ENCODE measurements at regions of chr6 and their contacts with region 1.

Region 1: DNA sequence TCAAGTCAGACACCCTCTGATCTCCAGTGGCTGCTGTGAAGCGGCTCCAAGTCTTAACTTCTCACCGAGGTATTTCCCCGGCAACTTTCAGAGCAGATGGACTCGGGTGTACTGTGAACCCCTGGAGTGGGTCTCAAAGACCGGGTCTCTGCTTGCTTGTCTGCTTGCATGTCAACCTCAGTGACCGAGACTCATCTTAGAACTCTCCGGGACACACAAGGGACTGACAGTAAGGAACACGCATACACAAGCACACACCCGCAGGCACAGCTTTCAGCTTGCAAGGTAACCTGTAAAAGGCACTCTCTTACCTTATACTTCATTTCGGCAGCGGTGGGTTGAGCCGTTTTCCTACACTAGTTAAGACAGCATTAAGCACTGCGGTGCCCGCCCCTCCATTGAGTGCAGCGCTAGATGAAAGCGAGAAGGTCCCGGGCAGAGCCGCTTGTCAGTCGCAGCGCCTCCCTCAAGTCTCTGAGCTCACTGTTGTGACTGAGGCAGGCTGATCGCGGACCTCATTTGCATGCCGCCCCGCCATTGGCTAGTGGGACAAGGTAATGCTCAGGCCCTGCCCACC is at the start of gene NEDD9:
- DNase-seq: peak; percentile 85 to 98 (median 90)
- ATAC-seq: peak; percentile 93
- H3K4me3 ChIP-seq: peak within 1 kb of the TSS; percentile 61
- H3K4me3 Mint-ChIP-seq: peak within 1 kb of the TSS; percentile 94
- H3K27ac ChIP-seq: peak within 1 kb of the TSS; percentile 73 to 89
- H3K27ac Mint-ChIP-seq: peak within 1 kb of the TSS; percentile 97
- H3K4me1 ChIP-seq: peaks cover 33% of the 10 kb centered on the region
- H3K4me1 Mint-ChIP-seq: peaks cover 53% of the 10 kb centered on the region
- H3K27me3 ChIP-seq: no peaks in the 10 kb centered on the region
- H3K27me3 Mint-ChIP-seq: no peaks in the 10 kb centered on the region
- CTCF ChIP-seq: no peak
- total RNA-seq, gene NEDD9: 40.9 to 44.3 TPM

Region 2: GRCh38 chr6:11093589-11094410 is 138.5 kb before region 1 on chr6 and contains the start of gene SMIM13:
- CTCF ChIA-PET with region 1: no interaction called
- POLR2A ChIA-PET with region 1: interaction called, 3 read pairs
- intact Hi-C with region 1: loop called (anchors 2 to 5 kb)
- DNase-seq: peak; percentile 88 to 97 (median 94)
- ATAC-seq: peak; percentile 92
- H3K4me3 ChIP-seq: peak within 1 kb of the TSS; percentile 83
- H3K4me3 Mint-ChIP-seq: peak within 1 kb of the TSS; percentile 97
- H3K27ac ChIP-seq: peak within 1 kb of the TSS; percentile 87 to 92
- H3K27ac Mint-ChIP-seq: peak within 1 kb of the TSS; percentile 97
- H3K4me1 ChIP-seq: peaks cover 20% of the 10 kb centered on the region
- H3K4me1 Mint-ChIP-seq: peaks cover 29% of the 10 kb centered on the region
- H3K27me3 ChIP-seq: no peaks in the 10 kb centered on the region
- H3K27me3 Mint-ChIP-seq: no peaks in the 10 kb centered on the region
- CTCF ChIP-seq: peak; percentile 74
- total RNA-seq, gene SMIM13: 3.0 to 4.6 TPM

Region 3: GRCh38 chr6:11161031-11161966 is 71.0 kb before region 1 on chr6:
- CTCF ChIA-PET with region 1: no interaction called
- POLR2A ChIA-PET with region 1: no interaction called
- intact Hi-C with region 1: no loop called
- DNase-seq: no peak
- ATAC-seq: no peak
- H3K4me3 ChIP-seq: no peak overlapping the region
- H3K4me3 Mint-ChIP-seq: no peak overlapping the region
- H3K27ac ChIP-seq: no peak overlapping the region
- H3K27ac Mint-ChIP-seq: no peak overlapping the region
- H3K4me1 ChIP-seq: no peaks in the 10 kb centered on the region
- H3K4me1 Mint-ChIP-seq: no peaks in the 10 kb centered on the region
- H3K27me3 ChIP-seq: no peaks in the 10 kb centered on the region
- H3K27me3 Mint-ChIP-seq: no peaks in the 10 kb centered on the region
- CTCF ChIP-seq: no peak

Region 4: GRCh38 chr6:11194356-11195218 is 37.7 kb before region 1 on chr6:
- CTCF ChIA-PET with region 1: no interaction called
- POLR2A ChIA-PET with region 1: interaction called, 7 read pairs
- intact Hi-C with region 1: loop called (anchors 2 to 5 kb)
- DNase-seq: no peak
- ATAC-seq: no peak
- H3K4me3 ChIP-seq: no peak overlapping the region
- H3K4me3 Mint-ChIP-seq: no peak overlapping the region
- H3K27ac ChIP-seq: no peak overlapping the region
- H3K27ac Mint-ChIP-seq: no peak overlapping the region
- H3K4me1 ChIP-seq: peaks cover 9% of the 10 kb centered on the region
- H3K4me1 Mint-ChIP-seq: peaks cover 20% of the 10 kb centered on the region
- H3K27me3 ChIP-seq: no peaks in the 10 kb centered on the region
- H3K27me3 Mint-ChIP-seq: no peaks in the 10 kb centered on the region
- CTCF ChIP-seq: no peak

Region 5: DNA sequence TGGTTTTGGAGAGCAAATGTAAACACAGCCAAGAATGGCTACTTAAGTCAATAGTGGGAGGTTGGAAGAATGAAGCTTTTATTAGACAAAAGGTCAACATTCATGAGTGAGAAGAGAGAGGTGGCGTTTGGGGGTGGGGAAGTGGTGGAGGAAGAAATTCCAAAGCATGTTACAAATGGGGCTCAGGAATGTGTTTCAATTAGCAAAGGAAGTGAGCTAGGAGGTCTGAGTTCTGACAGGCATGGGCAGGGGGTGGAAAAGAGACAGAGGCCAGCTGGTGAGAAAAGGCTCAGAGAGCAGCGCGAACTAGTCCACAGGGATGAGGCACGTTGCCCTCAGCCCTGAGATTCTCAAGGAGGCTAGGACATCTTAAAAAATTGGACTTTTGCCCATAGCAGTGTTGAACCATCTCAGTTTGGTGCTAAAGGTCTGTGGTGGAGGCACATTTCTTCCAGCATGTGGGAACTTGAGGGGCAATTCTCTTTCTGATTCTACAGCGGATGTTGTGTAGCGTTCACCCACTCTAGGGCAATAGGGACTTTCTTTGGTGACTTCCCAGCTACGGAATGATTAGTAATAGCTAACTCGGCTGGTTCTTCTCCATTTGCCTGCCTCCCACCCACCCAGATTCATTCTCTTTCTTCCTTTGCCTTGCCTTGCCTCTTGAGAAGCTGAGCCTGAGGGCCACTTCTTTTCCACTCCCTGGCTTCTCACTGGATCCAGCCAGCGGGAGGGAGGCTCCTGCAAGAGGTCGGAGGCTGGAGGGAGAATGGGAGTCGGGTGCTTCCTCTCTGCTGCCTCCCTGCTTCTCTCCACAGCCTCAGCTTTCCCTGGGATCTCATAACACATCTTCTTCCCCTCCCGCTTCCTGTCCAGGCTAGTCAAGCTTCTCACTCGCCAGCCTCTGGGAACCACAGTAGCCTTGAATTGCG is 45.3 kb after region 1 on chr6:
- CTCF ChIA-PET with region 1: no interaction called
- POLR2A ChIA-PET with region 1: no interaction called
- intact Hi-C with region 1: loop called in 1 of 2 experiments (anchors 5 kb)
- DNase-seq: peak in 3 of 14 experiments; percentile 52 to 68 (median 63)
- ATAC-seq: peak; percentile 62
- H3K4me3 ChIP-seq: peak overlapping the region; percentile 9
- H3K4me3 Mint-ChIP-seq: peak overlapping the region; percentile 42
- H3K27ac ChIP-seq: peak overlapping the region in 1 of 2 donors; percentile 50
- H3K27ac Mint-ChIP-seq: peak overlapping the region; percentile 60
- H3K4me1 ChIP-seq: peaks cover 30% of the 10 kb centered on the region
- H3K4me1 Mint-ChIP-seq: peaks cover 62% of the 10 kb centered on the region
- H3K27me3 ChIP-seq: no peaks in the 10 kb centered on the region
- H3K27me3 Mint-ChIP-seq: no peaks in the 10 kb centered on the region
- CTCF ChIP-seq: no peak

Region 6: GRCh38 chr6:11317885-11318771 is 85.8 kb after region 1 on chr6:
- CTCF ChIA-PET with region 1: interaction called, 3 read pairs
- POLR2A ChIA-PET with region 1: interaction called, 4 read pairs
- intact Hi-C with region 1: loop called in 1 of 2 experiments (anchors 2 kb)
- DNase-seq: peak; percentile 35 to 91 (median 54)
- ATAC-seq: peak; percentile 90
- H3K4me3 ChIP-seq: no peak overlapping the region
- H3K4me3 Mint-ChIP-seq: peak overlapping the region; percentile 53
- H3K27ac ChIP-seq: peak overlapping the region in 1 of 2 donors; percentile 47
- H3K27ac Mint-ChIP-seq: peak overlapping the region; percentile 85
- H3K4me1 ChIP-seq: peaks cover 24% of the 10 kb centered on the region
- H3K4me1 Mint-ChIP-seq: peaks cover 39% of the 10 kb centered on the region
- H3K27me3 ChIP-seq: no peaks in the 10 kb centered on the region
- H3K27me3 Mint-ChIP-seq: no peaks in the 10 kb centered on the region
- CTCF ChIP-seq: no peak

Region 7: GRCh38 chr6:11381801-11382513 is 149.7 kb after region 1 on chr6:
- CTCF ChIA-PET with region 1: no interaction called
- POLR2A ChIA-PET with region 1: interaction called, 13 read pairs
- intact Hi-C with region 1: loop called (anchors 2 kb)
- DNase-seq: peak; percentile 41 to 94 (median 59)
- ATAC-seq: peak; percentile 93
- H3K4me3 ChIP-seq: peak overlapping the region; percentile 71
- H3K4me3 Mint-ChIP-seq: peak overlapping the region; percentile 85
- H3K27ac ChIP-seq: peak overlapping the region; percentile 84 to 86
- H3K27ac Mint-ChIP-seq: peak overlapping the region; percentile 93
- H3K4me1 ChIP-seq: peaks cover 48% of the 10 kb centered on the region
- H3K4me1 Mint-ChIP-seq: peaks cover 69% of the 10 kb centered on the region
- H3K27me3 ChIP-seq: no peaks in the 10 kb centered on the region
- H3K27me3 Mint-ChIP-seq: no peaks in the 10 kb centered on the region
- CTCF ChIP-seq: no peak

Region 8: GRCh38 chr6:11537229-11538051 is 305.2 kb after region 1 on chr6 and contains the start of gene TMEM170B:
- CTCF ChIA-PET with region 1: no interaction called
- POLR2A ChIA-PET with region 1: no interaction called
- intact Hi-C with region 1: loop called (anchors 2 to 5 kb)
- DNase-seq: peak; percentile 94 to 99 (median 97)
- ATAC-seq: peak; percentile 92
- H3K4me3 ChIP-seq: peak within 1 kb of the TSS; percentile 73
- H3K4me3 Mint-ChIP-seq: peak within 1 kb of the TSS; percentile 93
- H3K27ac ChIP-seq: peak within 1 kb of the TSS in 1 of 2 donors; percentile 47
- H3K27ac Mint-ChIP-seq: peak within 1 kb of the TSS; percentile 84
- H3K4me1 ChIP-seq: peaks cover 14% of the 10 kb centered on the region
- H3K4me1 Mint-ChIP-seq: peaks cover 28% of the 10 kb centered on the region
- H3K27me3 ChIP-seq: no peaks in the 10 kb centered on the region
- H3K27me3 Mint-ChIP-seq: peaks cover 6% of the 10 kb centered on the region
- CTCF ChIP-seq: no peak
- total RNA-seq, gene TMEM170B: 1.9 to 2.1 TPM